Activated naive CD4-positive, alpha-beta T cell treated with anti-CD3 and anti-CD28 coated beads for 36 hours (primary cell): ENCODE measurements at regions of chr1 and their contacts with region 1.

Region 1: GRCh38 chr1:241592273-241592958 is 47.8 kb downstream of the CHML start:
- DNase-seq: peak; percentile 7
- H3K4me3 Mint-ChIP-seq: no peak overlapping the region
- H3K27ac Mint-ChIP-seq: peak overlapping the region; percentile 79
- H3K4me1 Mint-ChIP-seq: peaks cover 29% of the 10 kb centered on the region
- H3K27me3 Mint-ChIP-seq: no peaks in the 10 kb centered on the region

Region 2: GRCh38 chr1:240575981-240576662 is 1016.3 kb before region 1 on chr1:
- CTCF ChIA-PET with region 1: no interaction called
- intact Hi-C with region 1: loop called (anchors 1 kb)
- DNase-seq: peak; percentile 34
- H3K4me3 Mint-ChIP-seq: peak overlapping the region; percentile 36
- H3K27ac Mint-ChIP-seq: no peak overlapping the region
- H3K4me1 Mint-ChIP-seq: peaks cover 13% of the 10 kb centered on the region
- H3K27me3 Mint-ChIP-seq: no peaks in the 10 kb centered on the region

Region 3: GRCh38 chr1:241519308-241520079 is 72.9 kb before region 1 on chr1 and contains the start of gene FH:
- CTCF ChIA-PET with region 1: no interaction called
- intact Hi-C with region 1: loop called (anchors 1 kb)
- DNase-seq: peak; percentile 97
- H3K4me3 Mint-ChIP-seq: peak within 1 kb of the TSS; percentile 89
- H3K27ac Mint-ChIP-seq: peak within 1 kb of the TSS; percentile 77
- H3K4me1 Mint-ChIP-seq: peaks cover 11% of the 10 kb centered on the region
- H3K27me3 Mint-ChIP-seq: peaks cover 11% of the 10 kb centered on the region
- total RNA-seq, gene FH: 91.6 to 95.4 TPM

Region 4: DNA sequence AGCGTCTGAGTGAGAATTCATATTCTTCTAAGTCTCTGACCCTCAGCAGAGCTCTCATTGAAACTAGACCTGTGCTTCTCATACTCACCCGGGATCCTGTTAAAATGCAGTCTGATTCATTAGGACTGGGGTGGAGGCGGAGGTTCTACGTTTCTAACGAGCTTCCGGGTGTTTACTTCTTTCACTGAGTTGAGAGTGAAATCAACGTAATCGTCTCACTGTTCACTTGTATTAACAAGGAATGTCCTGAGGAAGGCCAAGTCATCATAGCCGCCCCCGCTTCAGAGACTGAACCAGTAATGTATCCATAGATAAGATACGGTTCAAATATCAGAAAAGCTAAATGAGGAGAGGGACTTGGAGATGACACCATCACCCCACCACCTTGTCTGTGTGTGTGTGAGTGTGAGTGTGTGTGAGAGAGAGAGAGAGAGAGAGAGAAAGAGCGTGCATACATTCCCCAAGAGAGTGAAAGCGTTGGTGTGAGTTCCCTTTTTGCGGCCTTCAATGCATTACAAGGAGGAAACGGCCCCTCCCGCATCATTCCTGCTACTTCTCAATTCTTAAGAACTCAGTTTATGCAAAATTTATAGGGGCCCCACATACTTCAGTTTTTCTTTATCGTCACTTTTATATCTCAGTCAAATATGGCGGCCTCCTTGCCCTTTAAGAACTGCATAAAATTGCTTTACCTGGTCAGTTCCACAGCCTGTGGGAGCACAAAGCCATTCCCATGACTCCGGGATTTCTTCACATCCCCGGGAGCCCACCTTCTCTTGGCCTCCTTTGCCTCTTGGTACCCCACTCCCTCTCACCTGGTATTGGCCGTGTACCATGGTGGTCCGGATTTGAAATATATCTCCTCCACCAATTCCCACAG is 40.4 kb before region 1 on chr1:
- CTCF ChIA-PET with region 1: interaction called, 4 read pairs
- intact Hi-C with region 1: loop called (anchors 1 kb)
- DNase-seq: peak; percentile 75
- H3K4me3 Mint-ChIP-seq: peak overlapping the region; percentile 67
- H3K27ac Mint-ChIP-seq: peak overlapping the region; percentile 89
- H3K4me1 Mint-ChIP-seq: peaks cover 20% of the 10 kb centered on the region
- H3K27me3 Mint-ChIP-seq: peaks cover 2% of the 10 kb centered on the region

Region 5: GRCh38 chr1:241640029-241640818 is 47.8 kb after region 1 on chr1 and contains the starts of genes CHML and OPN3:
- CTCF ChIA-PET with region 1: no interaction called
- intact Hi-C with region 1: loop called (anchors 1 kb)
- DNase-seq: peak; percentile 93
- H3K4me3 Mint-ChIP-seq: peak within 1 kb of the TSS; percentile 74
- H3K27ac Mint-ChIP-seq: peak within 1 kb of the TSS; percentile 81
- H3K4me1 Mint-ChIP-seq: peaks cover 39% of the 10 kb centered on the region
- H3K27me3 Mint-ChIP-seq: no peaks in the 10 kb centered on the region
- total RNA-seq, gene CHML: 19.9 to 21.1 TPM
- total RNA-seq, gene OPN3: 7.7 to 9.0 TPM

Region 6: DNA sequence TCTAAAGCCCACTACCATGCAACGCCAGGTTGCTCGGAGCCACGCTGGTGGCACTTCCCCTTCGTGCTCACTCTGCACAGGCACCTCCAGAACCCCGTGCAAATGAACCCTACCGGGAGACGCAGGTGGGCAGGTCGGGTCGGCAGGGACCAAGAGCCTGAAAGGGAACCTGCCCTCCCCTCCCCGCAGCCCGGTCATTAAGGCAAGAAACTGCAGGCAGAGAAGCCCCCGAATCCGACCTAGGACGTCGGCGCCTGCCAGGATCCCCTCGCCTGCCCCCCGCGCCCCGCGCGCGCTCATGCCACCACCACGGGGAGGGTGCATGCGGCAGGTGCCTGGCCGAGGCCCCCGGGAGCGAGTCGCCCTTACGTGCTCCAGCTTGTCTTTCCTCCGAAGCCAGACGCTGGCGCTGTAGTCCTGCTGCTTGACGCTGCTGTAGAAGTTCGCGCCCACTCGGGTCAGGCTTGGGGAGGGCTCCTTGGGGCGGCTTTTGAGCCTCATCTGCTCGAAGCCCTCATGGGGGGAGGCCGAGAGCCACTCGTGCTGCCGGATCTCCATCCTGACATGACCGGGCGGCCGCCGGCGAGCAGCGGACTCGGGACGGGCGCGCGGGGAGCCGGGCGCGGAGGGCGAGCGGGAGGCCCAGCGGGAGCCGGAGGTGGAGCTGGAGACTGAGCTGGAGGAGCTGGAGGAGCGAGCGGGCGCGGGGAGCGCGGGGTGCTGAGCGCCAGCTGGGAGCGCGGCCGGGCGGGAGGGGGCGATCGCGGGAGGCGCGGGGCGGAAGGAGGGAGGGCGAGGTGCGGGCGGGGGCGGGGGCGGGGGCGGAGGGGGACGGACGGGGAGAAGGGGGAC is 931.5 kb after region 1 on chr1:
- CTCF ChIA-PET with region 1: no interaction called
- intact Hi-C with region 1: loop called (anchors 2 kb)
- DNase-seq: peak; percentile 22
- H3K4me3 Mint-ChIP-seq: peak overlapping the region; percentile 34
- H3K27ac Mint-ChIP-seq: no peak overlapping the region
- H3K4me1 Mint-ChIP-seq: peaks cover 12% of the 10 kb centered on the region
- H3K27me3 Mint-ChIP-seq: peaks cover 46% of the 10 kb centered on the region